HepG2 (cell line): ENCODE measurements at regions of chr6 and their contacts with region 1.

Region 1: DNA sequence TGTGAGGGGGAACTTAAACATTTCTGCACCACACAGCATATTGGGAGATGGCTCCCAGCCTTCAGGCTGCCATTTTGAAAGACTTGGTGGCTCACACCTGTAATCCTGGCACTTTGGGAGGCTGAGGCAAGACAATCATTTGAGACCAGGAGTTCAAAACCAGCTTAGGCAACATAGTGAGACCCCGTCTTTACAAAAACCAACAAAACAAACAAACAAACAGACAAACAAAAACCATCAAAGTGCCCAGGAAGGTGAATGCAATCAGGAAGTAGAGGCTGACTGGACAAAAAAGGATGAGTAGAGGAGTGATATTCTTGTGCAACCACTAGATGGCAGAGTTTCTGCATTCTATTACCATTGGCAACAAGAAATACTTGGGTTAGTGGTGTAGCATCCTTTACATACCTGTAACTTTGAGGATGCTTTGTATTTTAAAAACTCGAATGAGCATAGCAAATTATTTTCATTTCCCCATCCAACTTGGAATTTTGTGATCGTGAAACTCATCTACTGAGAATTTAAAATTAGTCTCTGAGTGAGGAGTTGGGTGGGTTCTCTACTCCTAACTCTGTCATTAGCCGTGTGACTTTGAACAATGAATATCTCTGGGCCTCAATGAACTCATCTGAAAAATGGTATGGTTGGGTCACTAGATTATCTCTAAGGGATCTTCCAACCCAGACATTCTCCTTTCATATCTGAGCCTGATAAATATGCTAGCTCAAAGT is 84.4 kb downstream of the CRYBG1 start:
- DNase-seq: peak; percentile 58
- ATAC-seq: peak; percentile 85
- H3K4me3 ChIP-seq: no peak overlapping the region
- H3K27ac ChIP-seq: no peak overlapping the region
- H3K4me1 ChIP-seq: peaks cover 19% of the 10 kb centered on the region
- H3K27me3 ChIP-seq: no peaks in the 10 kb centered on the region
- CTCF ChIP-seq: peak; percentile 83
- EP300 ChIP-seq: no peak
- POLR2A ChIP-seq: no peak
- RAD21 ChIP-seq: peak; percentile 62

Region 2: GRCh38 chr6:106339334-106340029 is 105.5 kb before region 1 on chr6:
- CTCF ChIA-PET with region 1: interaction called, 4 read pairs
- POLR2A ChIA-PET with region 1: no interaction called
- in situ Hi-C with region 1: no loop called
- intact Hi-C with region 1: loop called (anchors 1 kb)
- DNase-seq: peak; percentile 46
- ATAC-seq: peak; percentile 98
- H3K4me3 ChIP-seq: no peak overlapping the region
- H3K27ac ChIP-seq: no peak overlapping the region
- H3K4me1 ChIP-seq: no peaks in the 10 kb centered on the region
- H3K27me3 ChIP-seq: peaks cover 0 to 8% of the 10 kb centered on the region in 2 experiments; a peak in 2 of 5 replicates
- CTCF ChIP-seq: peak; percentile 73
- EP300 ChIP-seq: no peak
- POLR2A ChIP-seq: no peak
- RAD21 ChIP-seq: no peak

Region 3: GRCh38 chr6:106360410-106360988 is 84.4 kb before region 1 on chr6 and contains the start of gene CRYBG1:
- CTCF ChIA-PET with region 1: interaction called, 3 read pairs
- POLR2A ChIA-PET with region 1: no interaction called
- in situ Hi-C with region 1: no loop called
- intact Hi-C with region 1: loop called (anchors 1 kb)
- DNase-seq: peak; percentile 27
- ATAC-seq: peak; percentile 97
- H3K4me3 ChIP-seq: peak within 1 kb of the TSS; percentile 34 to 77 (median 54); a peak in 5 of 6 replicates
- H3K27ac ChIP-seq: no peak within 1 kb of the TSS
- H3K4me1 ChIP-seq: peaks cover 7% of the 10 kb centered on the region
- H3K27me3 ChIP-seq: peaks cover 2 to 16% of the 10 kb centered on the region in 2 experiments; a peak in 4 of 5 replicates
- CTCF ChIP-seq: peak; percentile 85
- EP300 ChIP-seq: no peak
- POLR2A ChIP-seq: no peak
- RAD21 ChIP-seq: peak; percentile 62
- total RNA-seq, gene CRYBG1: 21.9 and 37.3 TPM in 2 replicates

Region 4: DNA sequence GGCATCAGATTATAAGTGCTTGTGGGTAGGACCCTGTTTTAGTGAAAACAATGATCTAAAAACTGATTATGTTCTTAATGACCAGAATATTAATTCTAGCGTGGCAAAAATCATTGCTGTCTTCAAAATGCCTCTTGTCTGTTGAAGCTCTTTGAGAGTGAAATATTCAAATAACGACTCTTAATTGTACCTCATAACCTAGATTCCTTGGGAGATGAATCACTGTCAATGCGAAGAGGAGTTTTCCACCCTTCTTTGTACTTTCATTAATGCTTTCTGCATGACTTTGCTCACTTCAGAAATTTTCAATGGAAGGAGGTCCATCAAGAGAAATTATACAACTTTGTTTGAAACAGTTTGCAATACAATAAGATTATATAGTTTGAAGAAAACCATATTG is 13.0 kb before region 1 on chr6:
- CTCF ChIA-PET with region 1: no interaction called
- POLR2A ChIA-PET with region 1: no interaction called
- in situ Hi-C with region 1: no loop called
- intact Hi-C with region 1: no loop called
- DNase-seq: no peak
- ATAC-seq: no peak
- H3K4me3 ChIP-seq: no peak overlapping the region
- H3K27ac ChIP-seq: no peak overlapping the region
- H3K4me1 ChIP-seq: peaks cover 8% of the 10 kb centered on the region
- H3K27me3 ChIP-seq: no peaks in the 10 kb centered on the region
- CTCF ChIP-seq: no peak
- EP300 ChIP-seq: no peak
- POLR2A ChIP-seq: no peak
- RAD21 ChIP-seq: no peak

Region 5: DNA sequence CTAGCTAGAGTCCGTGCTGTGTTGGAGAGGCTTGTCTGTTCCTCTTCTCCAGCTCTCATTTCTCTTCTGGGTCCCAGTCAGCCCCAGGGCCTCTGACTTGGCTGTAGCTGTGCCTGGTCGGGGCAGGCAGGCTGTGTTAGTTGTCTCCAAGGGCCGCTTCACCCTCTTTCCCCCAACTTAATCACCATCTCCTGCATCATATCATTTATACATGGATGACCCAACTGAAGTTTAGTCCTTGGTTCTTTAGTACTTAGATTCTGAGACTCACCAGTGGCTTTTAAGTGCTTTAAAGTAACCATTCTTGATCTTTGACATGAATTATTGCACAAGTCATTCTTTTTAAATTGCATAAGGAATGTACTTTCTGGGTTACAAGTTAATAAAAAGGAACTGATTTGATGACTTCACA is 57.0 kb after region 1 on chr6:
- CTCF ChIA-PET with region 1: no interaction called
- POLR2A ChIA-PET with region 1: no interaction called
- in situ Hi-C with region 1: no loop called
- intact Hi-C with region 1: no loop called
- DNase-seq: no peak
- ATAC-seq: no peak
- H3K4me3 ChIP-seq: no peak overlapping the region
- H3K27ac ChIP-seq: no peak overlapping the region
- H3K4me1 ChIP-seq: no peaks in the 10 kb centered on the region
- H3K27me3 ChIP-seq: no peaks in the 10 kb centered on the region; a peak in 1 of 5 replicates
- CTCF ChIP-seq: no peak
- EP300 ChIP-seq: no peak
- POLR2A ChIP-seq: no peak
- RAD21 ChIP-seq: no peak

Region 6: GRCh38 chr6:106512048-106512967 is 67.4 kb after region 1 on chr6:
- CTCF ChIA-PET with region 1: no interaction called
- POLR2A ChIA-PET with region 1: no interaction called
- in situ Hi-C with region 1: no loop called
- intact Hi-C with region 1: loop called (anchors 2 kb)
- DNase-seq: peak; percentile 68
- ATAC-seq: peak; percentile 83
- H3K4me3 ChIP-seq: peak overlapping the region; percentile 67 to 79 (median 68)
- H3K27ac ChIP-seq: peak overlapping the region; percentile 84
- H3K4me1 ChIP-seq: peaks cover 56% of the 10 kb centered on the region
- H3K27me3 ChIP-seq: peaks cover 0 to 13% of the 10 kb centered on the region in 2 experiments; a peak in 4 of 5 replicates
- CTCF ChIP-seq: peak; percentile 61
- EP300 ChIP-seq: peak in 1 of 2 experiments; percentile 20; a peak in 1 of 4 replicates
- POLR2A ChIP-seq: peak; percentile 68 to 74
- RAD21 ChIP-seq: no peak; the same call in none of the 2 replicates

Region 7: DNA sequence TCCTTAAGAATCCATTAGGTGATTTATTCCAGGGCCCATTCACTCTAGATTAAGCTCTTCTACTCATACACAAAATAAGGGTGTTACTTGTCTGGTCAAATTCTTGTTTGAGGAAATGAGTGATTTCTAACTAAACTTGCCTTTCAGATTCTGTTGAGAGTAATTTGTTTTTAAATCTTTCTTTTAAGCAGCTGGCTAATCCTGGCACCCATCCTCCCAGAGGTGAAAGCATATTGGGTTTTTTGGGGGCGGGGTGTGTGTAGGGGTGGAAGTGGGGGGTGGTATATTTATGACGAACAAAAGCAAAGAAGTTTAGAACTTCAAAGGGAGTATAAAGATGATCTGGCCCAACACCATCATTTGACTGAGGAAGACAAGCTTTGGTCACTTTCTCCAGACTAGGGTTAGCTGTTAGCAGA is 89.6 kb after region 1 on chr6:
- CTCF ChIA-PET with region 1: no interaction called
- POLR2A ChIA-PET with region 1: no interaction called
- in situ Hi-C with region 1: no loop called
- intact Hi-C with region 1: no loop called
- DNase-seq: no peak
- ATAC-seq: no peak
- H3K4me3 ChIP-seq: no peak overlapping the region
- H3K27ac ChIP-seq: no peak overlapping the region
- H3K4me1 ChIP-seq: peaks cover 6% of the 10 kb centered on the region
- H3K27me3 ChIP-seq: no peaks in the 10 kb centered on the region
- CTCF ChIP-seq: no peak
- EP300 ChIP-seq: no peak
- POLR2A ChIP-seq: no peak
- RAD21 ChIP-seq: no peak

Region 8: GRCh38 chr6:106556368-106556960 is 111.5 kb after region 1 on chr6:
- CTCF ChIA-PET with region 1: interaction called, 12 read pairs
- POLR2A ChIA-PET with region 1: no interaction called
- in situ Hi-C with region 1: no loop called
- intact Hi-C with region 1: no loop called
- DNase-seq: peak; percentile 15
- ATAC-seq: no peak
- H3K4me3 ChIP-seq: no peak overlapping the region
- H3K27ac ChIP-seq: no peak overlapping the region
- H3K4me1 ChIP-seq: peaks cover 41% of the 10 kb centered on the region
- H3K27me3 ChIP-seq: no peaks in the 10 kb centered on the region
- CTCF ChIP-seq: peak; percentile 21; the same call in 1 of the 2 replicates
- EP300 ChIP-seq: no peak
- POLR2A ChIP-seq: no peak
- RAD21 ChIP-seq: no peak

Region 9: DNA sequence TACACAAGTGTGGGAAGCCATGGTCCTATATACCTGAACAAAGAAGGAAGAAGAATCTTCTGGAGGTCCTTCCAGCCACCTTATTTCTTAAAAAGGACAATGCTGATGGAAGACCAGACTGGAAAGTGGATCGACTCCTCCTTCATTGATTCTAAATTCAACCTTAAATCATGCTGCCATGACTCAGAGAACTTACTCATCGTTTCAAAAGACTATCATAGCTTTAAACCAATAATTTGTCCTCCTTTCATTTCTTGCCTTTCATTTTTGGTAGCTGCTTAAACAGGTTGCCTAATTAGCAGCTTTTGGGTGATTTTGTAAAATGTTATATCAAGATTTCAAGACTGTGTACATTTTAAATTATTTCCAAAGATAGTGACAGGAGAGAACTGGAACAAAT is 123.6 kb after region 1 on chr6:
- CTCF ChIA-PET with region 1: interaction called, 81 read pairs
- POLR2A ChIA-PET with region 1: no interaction called
- in situ Hi-C with region 1: loop called (anchors 5 kb)
- intact Hi-C with region 1: loop called (anchors 1 kb)
- DNase-seq: no peak
- ATAC-seq: no peak
- H3K4me3 ChIP-seq: no peak overlapping the region
- H3K27ac ChIP-seq: no peak overlapping the region
- H3K4me1 ChIP-seq: no peaks in the 10 kb centered on the region
- H3K27me3 ChIP-seq: no peaks in the 10 kb centered on the region
- CTCF ChIP-seq: no peak
- EP300 ChIP-seq: no peak
- POLR2A ChIP-seq: no peak
- RAD21 ChIP-seq: no peak

Region 10: DNA sequence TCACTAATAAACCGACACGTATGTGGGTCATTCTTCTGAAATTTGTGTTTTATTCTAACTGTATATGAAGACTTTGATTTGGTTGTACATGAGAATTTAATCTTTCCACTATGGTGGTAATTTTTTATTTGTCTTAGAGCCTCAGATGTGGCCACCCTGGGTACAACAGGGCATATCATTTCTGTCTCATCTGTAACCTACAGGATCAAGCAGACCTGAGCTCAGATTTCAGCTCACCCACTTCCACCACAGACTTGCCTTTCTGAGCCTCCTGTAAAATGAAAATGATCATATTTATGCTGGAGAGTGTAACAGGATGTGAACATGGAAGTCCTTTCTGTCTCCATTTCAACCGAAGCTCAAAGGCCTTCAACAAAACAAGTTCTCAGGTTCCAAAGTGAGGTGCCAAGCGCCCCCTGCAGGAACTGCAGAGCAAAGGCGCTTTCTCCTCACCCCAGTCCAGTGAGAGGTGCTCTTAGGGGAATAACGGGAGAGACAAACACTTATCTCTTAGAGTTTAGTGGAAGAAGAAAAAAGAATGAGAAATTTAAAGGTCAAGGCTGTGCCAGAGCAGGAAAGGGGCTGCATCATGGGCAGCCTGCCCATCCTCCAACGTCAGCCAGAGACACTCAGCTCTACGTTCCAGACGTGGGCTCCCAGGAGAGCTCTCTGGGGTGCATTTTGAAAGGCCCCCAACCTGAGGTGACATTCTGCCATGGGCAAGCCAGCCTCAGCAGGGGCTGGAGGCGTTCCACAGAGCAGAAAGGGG is 552.6 kb after region 1 on chr6:
- CTCF ChIA-PET with region 1: no interaction called
- POLR2A ChIA-PET with region 1: no interaction called
- in situ Hi-C with region 1: no loop called
- intact Hi-C with region 1: loop called (anchors 5 kb)
- DNase-seq: peak; percentile 74
- ATAC-seq: peak; percentile 90
- H3K4me3 ChIP-seq: peak overlapping the region; percentile 48 to 69 (median 65)
- H3K27ac ChIP-seq: peak overlapping the region; percentile 58
- H3K4me1 ChIP-seq: peaks cover 37% of the 10 kb centered on the region
- H3K27me3 ChIP-seq: no peaks in the 10 kb centered on the region; a peak in 1 of 5 replicates
- CTCF ChIP-seq: peak; percentile 93
- EP300 ChIP-seq: no peak
- POLR2A ChIP-seq: no peak
- RAD21 ChIP-seq: peak; percentile 59; the same call in 1 of the 2 replicates